Body of pancreas (tissue), 4 donors: ENCODE measurements at regions of chr3 and their contacts with region 1.

Region 1: GRCh38 chr3:177190756-177191681 is 6.3 kb downstream of the TBL1XR1 start:
- DNase-seq: no peak
- ATAC-seq: no peak
- H3K4me3 ChIP-seq: no peak overlapping the region
- H3K27ac ChIP-seq: no peak overlapping the region
- H3K4me1 ChIP-seq: peaks cover 17% of the 10 kb centered on the region
- H3K27me3 ChIP-seq: no peaks in the 10 kb centered on the region
- CTCF ChIP-seq: no peak
- POLR2A ChIP-seq: no peak

Region 2: GRCh38 chr3:176219970-176220369 is 971.0 kb before region 1 on chr3:
- intact Hi-C with region 1: no loop called
- DNase-seq: no peak
- ATAC-seq: no peak
- H3K4me3 ChIP-seq: no peak overlapping the region
- H3K27ac ChIP-seq: no peak overlapping the region
- H3K4me1 ChIP-seq: no peaks in the 10 kb centered on the region
- H3K27me3 ChIP-seq: no peaks in the 10 kb centered on the region
- CTCF ChIP-seq: no peak
- POLR2A ChIP-seq: no peak

Region 3: DNA sequence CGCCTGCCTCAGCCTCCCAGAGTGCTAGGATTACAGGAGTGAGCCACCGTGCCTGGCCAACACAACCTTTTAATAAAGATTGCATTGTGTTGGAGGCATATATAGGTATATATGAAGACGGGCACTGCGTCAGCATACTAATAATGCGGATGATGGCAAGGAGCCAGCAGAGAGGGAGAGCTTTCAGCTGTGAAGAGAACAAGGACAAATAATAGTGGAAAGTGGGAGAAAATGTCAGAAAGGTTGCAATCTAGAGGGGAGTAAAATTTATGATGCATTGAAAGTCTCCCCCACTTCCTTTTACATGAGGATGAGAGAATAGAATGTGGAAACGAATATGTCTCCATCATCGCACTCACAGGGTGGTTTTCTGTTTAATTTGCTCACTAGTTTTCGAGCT is 176.8 kb after region 1 on chr3:
- intact Hi-C with region 1: loop called (anchors 5 kb)
- DNase-seq: no peak
- ATAC-seq: no peak
- H3K4me3 ChIP-seq: no peak overlapping the region
- H3K27ac ChIP-seq: no peak overlapping the region
- H3K4me1 ChIP-seq: no peaks in the 10 kb centered on the region
- H3K27me3 ChIP-seq: no peaks in the 10 kb centered on the region
- CTCF ChIP-seq: no peak
- POLR2A ChIP-seq: no peak